ENCODE measurements at regions of chr11 and their contacts with region 1.

Region 1: GRCh38 chr11:120303004-120303637 is 22.0 kb upstream of the TLCD5 start:
- DNase-seq: peak in 5 of 10 donors; percentile 30 to 64 (median 58)

Region 2: GRCh38 chr11:120079750-120080490 is 223.2 kb before region 1 on chr11:
- intact Hi-C with region 1: no loop called
- DNase-seq: peak in 2 of 10 donors; percentile 25 to 92

Region 3: GRCh38 chr11:120172054-120172911 is 130.8 kb before region 1 on chr11:
- intact Hi-C with region 1: loop called (anchors 2 kb)
- DNase-seq: peak in 9 of 10 donors; percentile 63 to 96 (median 71)

Region 4: DNA sequence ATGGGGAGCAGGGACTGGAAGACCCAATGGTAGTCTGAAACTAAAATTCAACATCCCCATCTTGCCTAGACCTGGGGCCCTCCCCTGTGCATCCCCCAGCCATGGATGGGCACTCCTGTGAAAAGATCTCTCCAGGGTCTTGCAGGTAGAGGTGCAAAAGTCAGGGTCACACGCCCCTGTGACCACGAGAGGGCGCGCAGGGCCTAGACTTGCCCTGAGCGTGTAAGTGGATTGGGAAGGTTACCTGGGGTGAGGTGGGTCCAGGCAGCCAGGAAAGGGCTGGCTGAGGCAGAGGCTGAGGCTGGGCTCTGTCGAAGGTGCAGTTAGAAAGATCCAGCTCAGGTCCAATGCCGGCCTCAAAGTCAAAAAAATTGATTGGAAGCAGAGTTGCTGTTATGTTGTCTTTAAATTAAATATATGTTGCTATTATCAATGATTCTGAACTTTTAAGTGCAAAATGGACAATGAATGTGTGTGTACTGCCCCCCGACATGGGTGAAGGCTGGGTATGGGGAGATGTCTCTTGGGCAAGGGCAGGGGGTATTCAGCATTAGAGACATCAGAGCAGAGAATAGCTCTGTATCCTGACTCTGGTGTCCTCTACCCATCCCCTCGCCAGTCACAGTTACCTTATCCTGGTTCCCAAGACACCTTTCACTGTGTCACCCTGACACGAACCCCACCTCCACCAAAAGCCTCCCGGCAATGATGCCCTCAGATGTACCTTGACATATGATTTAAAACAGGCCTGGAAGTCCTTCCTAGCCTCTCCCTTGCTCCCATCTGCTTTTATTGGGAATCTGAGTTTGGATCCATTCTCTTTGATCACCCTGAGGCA is 67.9 kb before region 1 on chr11:
- intact Hi-C with region 1: loop called (anchors 5 kb)
- DNase-seq: peak in 4 of 10 donors; percentile 38 to 91 (median 71)

Region 5: GRCh38 chr11:120590472-120590871 is 287.4 kb after region 1 on chr11:
- intact Hi-C with region 1: no loop called
- DNase-seq: no peak

Measured in posterior cingulate gyrus (tissue), 11 donors.